Adrenal gland (tissue), 19 donors: ENCODE measurements at regions of chr5 and their contacts with region 1.

Region 1: DNA sequence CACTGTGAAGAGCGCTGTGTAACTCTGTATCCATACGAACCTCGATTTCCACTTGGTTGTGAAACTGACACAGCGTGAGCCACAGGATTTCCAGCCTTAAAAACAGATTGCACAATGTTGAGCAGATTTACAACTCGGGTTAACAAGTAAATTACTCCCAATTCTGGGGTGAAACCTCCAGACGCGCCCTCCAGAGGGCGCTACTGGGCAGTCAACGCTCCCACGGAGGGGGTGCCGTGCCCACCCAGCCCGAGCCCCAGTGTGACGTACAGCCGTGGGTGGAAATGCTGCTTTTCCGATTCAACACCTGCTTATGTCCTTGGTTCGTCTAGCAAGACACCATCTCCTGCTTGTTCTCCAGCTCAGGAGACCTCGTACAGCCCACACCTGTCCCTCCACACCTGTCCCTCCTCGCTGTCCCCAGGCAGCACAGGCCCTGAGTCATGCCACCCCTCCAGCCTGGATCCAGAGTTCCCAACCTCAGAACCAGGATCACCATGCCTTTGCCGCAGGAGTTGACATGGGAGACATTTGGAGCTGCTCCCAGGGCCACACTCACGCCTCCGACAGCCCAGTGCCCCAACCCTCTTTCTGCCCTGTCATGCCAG is 34.4 kb upstream of the SLC6A3 start:
- DNase-seq: peak in 6 of 7 donors; percentile 39 to 73 (median 58)
- H3K4me3 ChIP-seq: no peak overlapping the region
- H3K27ac ChIP-seq: peak overlapping the region in 4 of 5 donors; percentile 32 to 86 (median 68)
- H3K4me1 ChIP-seq: peaks cover 5 to 15% of the 10 kb centered on the region in 2 donors
- H3K27me3 ChIP-seq: no peaks in the 10 kb centered on the region
- CTCF ChIP-seq: peak; percentile 43 to 68 (median 58)
- POLR2A ChIP-seq: no peak

Region 2: DNA sequence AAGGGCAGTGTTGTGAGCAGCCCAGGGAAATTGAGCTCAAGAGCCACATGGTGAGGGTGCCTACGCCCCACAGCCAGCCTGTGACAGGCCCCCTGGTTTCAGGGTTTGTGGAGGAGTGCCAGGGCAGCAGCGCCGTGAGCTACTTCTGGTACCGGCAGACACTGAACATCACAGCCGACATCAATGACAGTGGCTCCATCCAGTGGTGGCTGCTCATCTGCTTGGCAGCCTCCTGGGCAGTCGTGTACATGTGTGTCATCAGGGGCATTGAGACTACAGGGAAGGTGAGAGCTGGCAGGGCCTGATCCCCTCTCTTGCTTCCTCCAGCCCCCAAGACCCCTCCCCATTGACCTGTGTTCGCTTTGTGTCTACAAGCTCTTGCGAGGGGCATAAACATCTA is 244.3 kb before region 1 on chr5:
- intact Hi-C with region 1: no loop called
- DNase-seq: no peak
- H3K4me3 ChIP-seq: no peak overlapping the region
- H3K27ac ChIP-seq: no peak overlapping the region
- H3K4me1 ChIP-seq: no peaks in the 10 kb centered on the region
- H3K27me3 ChIP-seq: no peaks in the 10 kb centered on the region
- CTCF ChIP-seq: no peak
- POLR2A ChIP-seq: no peak

Region 3: GRCh38 chr5:1494780-1495524 is 15.3 kb after region 1 on chr5:
- intact Hi-C with region 1: no loop called
- DNase-seq: peak in 2 of 7 donors; percentile 43 to 47
- H3K4me3 ChIP-seq: no peak overlapping the region
- H3K27ac ChIP-seq: peak overlapping the region in 1 of 5 donors; percentile 47
- H3K4me1 ChIP-seq: peaks cover 0 to 1% of the 10 kb centered on the region in 2 donors
- H3K27me3 ChIP-seq: no peaks in the 10 kb centered on the region
- CTCF ChIP-seq: no peak
- POLR2A ChIP-seq: no peak

Region 4: GRCh38 chr5:1633605-1634336 is 154.1 kb after region 1 on chr5:
- intact Hi-C with region 1: loop called in 1 of 2 experiments (anchors 10 kb)
- DNase-seq: peak; percentile 76 to 87 (median 80)
- H3K4me3 ChIP-seq: peak overlapping the region; percentile 33 to 86 (median 54)
- H3K27ac ChIP-seq: peak overlapping the region in 4 of 5 donors; percentile 81 to 91 (median 85)
- H3K4me1 ChIP-seq: no peaks in the 10 kb centered on the region
- H3K27me3 ChIP-seq: no peaks in the 10 kb centered on the region
- CTCF ChIP-seq: peak in 1 of 6 experiments; percentile 7
- POLR2A ChIP-seq: peak; percentile 63 to 69